B cell (primary cell): ENCODE measurements at regions of chr1 and their contacts with region 1.

Region 1: DNA sequence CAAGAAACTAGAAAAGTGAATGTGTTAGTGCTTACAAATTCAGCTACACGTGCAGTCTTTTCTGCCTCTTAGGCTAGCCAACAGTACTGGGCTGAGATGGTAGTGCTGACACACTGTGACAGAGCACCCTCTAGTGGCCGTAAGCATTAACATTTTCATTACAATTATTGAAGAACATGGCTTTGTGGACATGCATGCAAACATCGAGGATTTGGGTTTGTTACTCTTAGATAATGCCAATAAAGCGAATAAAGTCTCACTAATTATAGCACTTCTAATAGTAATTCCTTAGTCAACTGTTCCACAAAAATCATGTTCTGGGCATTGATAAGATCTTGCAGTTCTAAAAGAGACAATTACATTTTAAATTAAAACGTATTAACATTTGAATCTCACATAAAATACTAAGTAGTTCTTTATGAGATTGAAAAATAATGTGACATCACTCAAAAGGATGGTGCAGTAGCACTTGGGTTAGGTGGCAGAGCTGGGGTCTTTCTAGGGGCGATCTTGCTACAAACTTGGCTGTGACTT is 47.1 kb downstream of the MYSM1 start:
- DNase-seq: peak; percentile 75
- ATAC-seq: peak; percentile 81
- H3K4me3 ChIP-seq: no peak overlapping the region
- H3K4me3 Mint-ChIP-seq: no peak overlapping the region
- H3K27ac ChIP-seq: no peak overlapping the region
- H3K27ac Mint-ChIP-seq: no peak overlapping the region
- H3K4me1 ChIP-seq: no peaks in the 10 kb centered on the region
- H3K4me1 Mint-ChIP-seq: peaks cover 4% of the 10 kb centered on the region
- H3K27me3 ChIP-seq: no peaks in the 10 kb centered on the region
- H3K27me3 Mint-ChIP-seq: no peaks in the 10 kb centered on the region
- CTCF ChIP-seq: peak; percentile 90

Region 2: DNA sequence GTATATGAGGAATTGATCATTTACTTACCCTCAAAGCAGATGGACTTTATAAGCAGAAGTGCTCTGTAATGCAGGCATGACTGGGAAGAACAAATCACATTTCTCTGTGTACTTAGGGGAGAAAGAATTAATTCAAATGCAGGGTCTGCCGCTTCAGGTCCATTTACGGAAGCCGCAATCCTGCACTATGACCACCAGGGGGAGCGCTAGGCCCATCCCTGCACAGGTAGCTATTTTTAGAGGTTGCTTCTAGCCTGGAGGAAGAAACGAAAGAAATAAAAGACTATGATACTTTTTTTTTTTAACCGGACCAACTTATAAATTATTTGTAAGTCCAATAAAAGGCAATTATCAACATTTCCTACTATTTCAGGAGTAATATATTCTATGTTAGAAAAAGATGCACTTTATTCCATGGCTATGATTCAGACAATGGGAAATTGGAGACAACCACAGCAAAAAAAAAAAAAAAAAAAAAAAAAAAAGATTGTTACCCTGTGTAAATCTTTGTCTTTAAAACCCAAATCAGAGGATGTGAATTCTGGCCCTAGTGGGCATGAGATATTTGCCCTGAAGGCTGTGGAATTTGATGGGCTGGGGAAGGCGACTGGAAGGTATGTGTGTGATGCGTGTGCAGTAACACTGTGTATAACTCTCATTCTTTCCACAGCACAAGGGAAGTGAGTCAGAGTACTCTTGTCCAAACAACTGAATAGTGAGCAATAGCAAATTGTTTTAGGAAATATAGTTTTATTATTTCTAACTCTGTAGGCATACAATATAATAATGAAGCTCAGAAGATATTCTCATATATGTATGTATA is 1820.6 kb before region 1 on chr1:
- CTCF ChIA-PET with region 1: interaction called, 21 read pairs
- POLR2A ChIA-PET with region 1: no interaction called
- intact Hi-C with region 1: no loop called
- DNase-seq: peak; percentile 74
- ATAC-seq: peak; percentile 62
- H3K4me3 ChIP-seq: no peak overlapping the region
- H3K4me3 Mint-ChIP-seq: no peak overlapping the region
- H3K27ac ChIP-seq: no peak overlapping the region
- H3K27ac Mint-ChIP-seq: no peak overlapping the region
- H3K4me1 ChIP-seq: no peaks in the 10 kb centered on the region
- H3K4me1 Mint-ChIP-seq: peaks cover 2% of the 10 kb centered on the region
- H3K27me3 ChIP-seq: no peaks in the 10 kb centered on the region
- H3K27me3 Mint-ChIP-seq: peaks cover 25% of the 10 kb centered on the region
- CTCF ChIP-seq: peak; percentile 98

Region 3: GRCh38 chr1:58515794-58516401 is 136.8 kb before region 1 on chr1:
- CTCF ChIA-PET with region 1: interaction called, 98 read pairs
- POLR2A ChIA-PET with region 1: no interaction called
- intact Hi-C with region 1: loop called (anchors 1 kb)
- DNase-seq: peak; percentile 76
- ATAC-seq: peak; percentile 51
- H3K4me3 ChIP-seq: no peak overlapping the region
- H3K4me3 Mint-ChIP-seq: no peak overlapping the region
- H3K27ac ChIP-seq: peak overlapping the region in 1 of 2 donors; percentile 9
- H3K27ac Mint-ChIP-seq: peak overlapping the region; percentile 46
- H3K4me1 ChIP-seq: no peaks in the 10 kb centered on the region
- H3K4me1 Mint-ChIP-seq: no peaks in the 10 kb centered on the region
- H3K27me3 ChIP-seq: no peaks in the 10 kb centered on the region
- H3K27me3 Mint-ChIP-seq: no peaks in the 10 kb centered on the region
- CTCF ChIP-seq: peak; percentile 90

Region 4: DNA sequence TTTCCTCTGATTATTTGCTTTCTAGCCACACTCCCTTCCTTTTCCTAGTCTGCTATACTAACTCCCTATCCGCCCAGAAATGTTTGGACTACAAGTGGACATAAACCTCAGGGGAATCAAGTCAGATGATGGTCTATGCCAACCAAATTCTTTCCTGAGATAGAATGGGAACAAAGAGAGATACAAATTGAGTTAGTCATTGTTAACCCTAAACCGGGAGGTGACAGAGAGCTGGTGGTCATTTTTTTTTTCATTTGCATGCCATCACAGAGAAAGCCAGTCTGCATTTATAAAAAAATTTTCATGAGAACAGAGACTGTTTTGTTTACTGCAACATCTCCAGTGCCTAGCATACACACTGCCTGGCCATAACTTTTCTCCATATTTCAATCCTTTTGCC is 12.2 kb after region 1 on chr1:
- CTCF ChIA-PET with region 1: interaction called, 20 read pairs
- POLR2A ChIA-PET with region 1: no interaction called
- intact Hi-C with region 1: no loop called
- DNase-seq: no peak
- ATAC-seq: no peak
- H3K4me3 ChIP-seq: no peak overlapping the region
- H3K4me3 Mint-ChIP-seq: no peak overlapping the region
- H3K27ac ChIP-seq: no peak overlapping the region
- H3K27ac Mint-ChIP-seq: no peak overlapping the region
- H3K4me1 ChIP-seq: no peaks in the 10 kb centered on the region
- H3K4me1 Mint-ChIP-seq: no peaks in the 10 kb centered on the region
- H3K27me3 ChIP-seq: no peaks in the 10 kb centered on the region
- H3K27me3 Mint-ChIP-seq: no peaks in the 10 kb centered on the region
- CTCF ChIP-seq: no peak

Region 5: DNA sequence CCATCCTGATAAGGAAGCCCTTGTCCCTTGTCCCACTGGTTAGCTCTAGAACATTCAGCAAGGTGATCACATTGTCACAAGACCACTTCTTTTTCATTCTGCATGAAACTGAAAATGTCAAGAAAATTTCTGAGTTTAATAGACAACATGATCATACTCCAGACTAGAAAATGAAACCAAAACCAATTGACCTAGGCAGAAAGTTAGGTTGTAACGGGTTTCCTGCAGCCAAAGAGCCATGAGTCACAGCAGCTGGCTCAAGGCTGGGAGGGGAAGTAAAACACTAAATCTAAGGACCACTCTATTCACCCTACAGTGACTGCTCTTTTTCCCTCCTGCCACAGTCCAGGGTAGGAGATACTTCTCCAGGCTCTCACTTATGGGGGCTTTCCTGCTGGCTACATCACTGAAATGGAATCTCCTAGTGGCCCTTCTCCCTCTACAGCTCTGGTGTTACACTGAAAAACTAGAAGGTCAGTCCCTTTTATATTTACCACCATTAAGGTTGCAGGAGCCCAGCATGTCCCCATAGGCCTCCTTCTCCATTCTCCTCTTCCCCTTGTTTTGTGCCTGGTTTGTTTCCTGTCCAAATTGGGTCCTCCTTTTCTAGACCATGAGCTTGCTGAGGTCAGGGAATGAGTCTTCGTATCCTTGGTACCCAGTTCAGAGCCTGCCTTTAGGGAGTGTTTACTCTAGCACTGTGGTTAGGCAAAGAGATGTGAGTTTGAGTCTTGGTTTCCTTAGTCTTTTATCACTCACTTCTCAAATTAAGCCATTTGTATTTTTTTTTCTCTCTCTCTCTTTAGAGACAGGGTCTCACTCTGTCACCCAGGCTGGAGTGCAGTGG is 367.7 kb after region 1 on chr1:
- CTCF ChIA-PET with region 1: no interaction called
- POLR2A ChIA-PET with region 1: no interaction called
- intact Hi-C with region 1: no loop called
- DNase-seq: peak; percentile 83
- ATAC-seq: peak; percentile 94
- H3K4me3 ChIP-seq: peak overlapping the region in 3 of 5 experiments; percentile 18 to 41 (median 33)
- H3K4me3 Mint-ChIP-seq: peak overlapping the region; percentile 76
- H3K27ac ChIP-seq: peak overlapping the region; percentile 81 to 82
- H3K27ac Mint-ChIP-seq: peak overlapping the region; percentile 96
- H3K4me1 ChIP-seq: peaks cover 22 to 38% of the 10 kb centered on the region in 2 donors
- H3K4me1 Mint-ChIP-seq: peaks cover 48% of the 10 kb centered on the region
- H3K27me3 ChIP-seq: no peaks in the 10 kb centered on the region
- H3K27me3 Mint-ChIP-seq: no peaks in the 10 kb centered on the region
- CTCF ChIP-seq: no peak